Transverse colon (tissue), 4 donors: ENCODE measurements at regions of chr6 and their contacts with region 1.

Region 1: DNA sequence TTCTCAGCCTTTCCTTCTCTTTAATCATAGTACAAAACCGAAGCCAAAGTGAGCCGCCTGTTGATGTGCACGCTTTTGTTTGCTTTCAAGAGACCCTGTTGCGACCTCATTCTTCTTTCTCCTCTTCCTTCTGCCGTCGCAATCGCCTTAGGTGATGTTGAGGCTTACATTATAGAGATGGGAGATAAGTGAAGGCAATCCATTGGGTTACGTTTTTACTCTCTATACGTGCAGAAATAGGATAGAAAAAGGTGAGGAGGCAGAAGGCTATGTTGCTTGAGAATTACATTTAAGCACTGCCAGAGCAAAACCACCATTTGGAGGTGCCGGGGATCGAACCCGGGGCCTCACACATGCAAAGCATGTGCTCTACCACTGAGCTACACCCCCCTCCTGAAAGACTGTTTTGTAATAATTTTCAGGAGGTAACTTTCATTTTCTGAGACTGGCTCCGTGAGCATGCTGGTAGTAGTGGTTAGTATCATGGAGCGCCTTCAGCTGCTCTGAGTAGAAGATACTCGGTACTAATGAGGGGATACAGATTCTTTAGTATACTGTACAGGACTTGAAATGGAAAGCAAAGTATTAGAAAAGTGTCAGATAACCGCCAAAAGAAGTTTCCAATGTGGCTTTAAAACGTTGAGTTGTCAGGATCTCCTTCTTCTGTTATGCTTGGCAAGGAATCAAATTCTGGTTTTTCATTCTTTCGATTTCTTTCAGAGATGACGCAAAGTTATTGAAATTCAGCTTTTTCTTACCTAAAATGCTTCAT is 165.6 kb downstream of the TRIM27 start:
- DNase-seq: no peak
- H3K4me3 ChIP-seq: no peak overlapping the region
- H3K27ac ChIP-seq: no peak overlapping the region
- H3K4me1 ChIP-seq: no peaks in the 10 kb centered on the region
- H3K27me3 ChIP-seq: peaks cover 46% of the 10 kb centered on the region
- CTCF ChIP-seq: no peak
- EP300 ChIP-seq: no peak
- POLR2A ChIP-seq: no peak

Region 2: GRCh38 chr6:27847706-27848105 is 910.5 kb before region 1 on chr6:
- in situ Hi-C with region 1: no loop called
- intact Hi-C with region 1: no loop called
- DNase-seq: no peak
- H3K4me3 ChIP-seq: no peak overlapping the region
- H3K27ac ChIP-seq: no peak overlapping the region
- H3K4me1 ChIP-seq: no peaks in the 10 kb centered on the region
- H3K27me3 ChIP-seq: no peaks in the 10 kb centered on the region
- CTCF ChIP-seq: no peak
- EP300 ChIP-seq: no peak
- POLR2A ChIP-seq: no peak

Region 3: GRCh38 chr6:28725890-28726348 is 32.3 kb before region 1 on chr6:
- in situ Hi-C with region 1: no loop called
- intact Hi-C with region 1: loop called (anchors 2 kb)
- DNase-seq: no peak
- H3K4me3 ChIP-seq: no peak overlapping the region
- H3K27ac ChIP-seq: no peak overlapping the region
- H3K4me1 ChIP-seq: peaks cover 0 to 8% (median 0%) of the 10 kb centered on the region in 4 donors
- H3K27me3 ChIP-seq: peaks cover 84% of the 10 kb centered on the region
- CTCF ChIP-seq: no peak
- EP300 ChIP-seq: no peak
- POLR2A ChIP-seq: no peak

Region 4: GRCh38 chr6:28838634-28839442 is 80.6 kb after region 1 on chr6:
- in situ Hi-C with region 1: no loop called
- intact Hi-C with region 1: no loop called
- DNase-seq: peak; percentile 86
- H3K4me3 ChIP-seq: peak overlapping the region; percentile 29 to 60 (median 51)
- H3K27ac ChIP-seq: peak overlapping the region; percentile 71 to 79 (median 74)
- H3K4me1 ChIP-seq: peaks cover 0 to 21% (median 11%) of the 10 kb centered on the region in 4 donors
- H3K27me3 ChIP-seq: peaks cover 59% of the 10 kb centered on the region
- CTCF ChIP-seq: peak; percentile 44 to 55 (median 54)
- EP300 ChIP-seq: no peak
- POLR2A ChIP-seq: no peak

Region 5: GRCh38 chr6:29319931-29320330 is 561.7 kb after region 1 on chr6:
- in situ Hi-C with region 1: no loop called
- intact Hi-C with region 1: no loop called
- DNase-seq: no peak
- H3K4me3 ChIP-seq: no peak overlapping the region
- H3K27ac ChIP-seq: no peak overlapping the region
- H3K4me1 ChIP-seq: no peaks in the 10 kb centered on the region
- H3K27me3 ChIP-seq: no peaks in the 10 kb centered on the region
- CTCF ChIP-seq: no peak
- EP300 ChIP-seq: no peak
- POLR2A ChIP-seq: no peak